ENCODE measurements at regions of chr9 and their contacts with region 1.

Region 1: GRCh38 chr9:98372077-98372836 is 116.8 kb upstream of the TBC1D2 start:
- DNase-seq: no peak

Region 2: GRCh38 chr9:98331536-98332259 is 40.6 kb before region 1 on chr9:
- intact Hi-C with region 1: loop called in 1 of 2 experiments (anchors 1 kb)
- DNase-seq: no peak